Pancreas (tissue), 10 donors: ENCODE measurements at regions of chr10 and their contacts with region 1.

Region 1: GRCh38 chr10:107814865-107815487 is 650.5 kb upstream of the SORCS1 start:
- DNase-seq: peak in 3 of 6 donors; percentile 20 to 53 (median 36)
- ATAC-seq: peak; percentile 66 to 92 (median 90)
- H3K4me3 ChIP-seq: no peak overlapping the region
- H3K27ac ChIP-seq: no peak overlapping the region
- H3K4me1 ChIP-seq: no peaks in the 10 kb centered on the region
- H3K27me3 ChIP-seq: no peaks in the 10 kb centered on the region
- CTCF ChIP-seq: peak in 3 of 4 donors; percentile 31 to 38 (median 33)

Region 2: DNA sequence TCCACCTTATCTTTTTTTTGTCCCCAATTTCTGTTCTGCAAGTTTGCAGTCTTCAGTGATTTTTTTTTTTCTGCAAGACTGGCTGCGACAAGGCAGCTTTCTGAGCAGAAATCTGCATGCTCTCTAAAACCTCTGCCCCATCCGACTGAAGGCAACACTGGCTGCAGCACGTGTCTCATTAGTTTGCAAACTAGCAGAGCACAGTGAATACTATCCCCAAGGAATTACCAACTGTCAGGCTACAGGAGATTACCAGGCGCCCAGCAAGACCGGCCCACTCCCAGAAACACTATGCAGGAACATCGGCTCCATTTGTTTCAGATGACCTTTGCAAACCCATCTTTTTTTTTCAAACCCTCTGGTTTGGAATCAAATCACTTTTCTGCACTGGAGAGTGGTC is 1189.2 kb before region 1 on chr10:
- intact Hi-C with region 1: loop called in 1 of 3 experiments (anchors 10 kb)
- DNase-seq: no peak
- ATAC-seq: no peak
- H3K4me3 ChIP-seq: no peak overlapping the region
- H3K27ac ChIP-seq: no peak overlapping the region
- H3K4me1 ChIP-seq: no peaks in the 10 kb centered on the region
- H3K27me3 ChIP-seq: no peaks in the 10 kb centered on the region
- CTCF ChIP-seq: no peak

Region 3: DNA sequence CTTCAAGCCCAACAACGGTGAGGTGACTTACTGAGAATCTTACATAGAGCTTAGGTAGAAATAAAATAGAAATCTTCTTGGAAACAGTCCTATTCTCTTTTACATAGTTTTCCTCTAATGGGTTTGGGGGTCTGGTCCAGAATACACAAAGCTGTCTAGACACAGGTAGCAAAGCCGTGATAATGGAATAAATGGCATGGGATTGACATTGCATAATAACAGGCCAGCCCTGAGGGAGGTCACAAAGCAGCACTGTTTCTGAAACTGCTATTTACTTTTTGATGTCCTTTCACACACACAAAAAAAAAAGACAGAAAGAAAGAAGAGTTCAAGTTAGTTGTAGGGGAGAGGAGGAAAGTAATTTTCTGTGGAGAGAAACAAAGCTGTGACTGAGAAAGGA is 285.6 kb before region 1 on chr10:
- intact Hi-C with region 1: no loop called
- DNase-seq: no peak
- ATAC-seq: no peak
- H3K4me3 ChIP-seq: no peak overlapping the region
- H3K27ac ChIP-seq: no peak overlapping the region
- H3K4me1 ChIP-seq: no peaks in the 10 kb centered on the region
- H3K27me3 ChIP-seq: no peaks in the 10 kb centered on the region
- CTCF ChIP-seq: no peak

Region 4: DNA sequence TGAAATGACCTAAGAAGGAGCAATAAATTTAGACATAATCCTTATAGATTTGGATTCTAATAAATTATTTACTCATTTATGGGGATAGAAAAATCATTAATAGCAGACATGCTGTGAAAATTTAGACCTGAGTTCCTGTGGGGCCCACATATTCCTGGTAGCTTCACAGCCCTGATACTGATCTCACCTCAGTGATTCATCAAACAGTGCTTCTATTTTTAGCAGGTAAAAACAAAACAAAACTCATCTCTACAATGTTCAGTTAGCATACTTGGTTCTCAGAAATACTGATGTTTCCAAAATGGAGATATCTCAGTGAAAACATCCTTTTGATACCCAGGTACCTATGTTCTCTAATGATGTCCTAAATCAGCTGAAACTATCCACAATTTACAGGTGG is 190.7 kb after region 1 on chr10:
- intact Hi-C with region 1: no loop called
- DNase-seq: no peak
- ATAC-seq: no peak
- H3K4me3 ChIP-seq: no peak overlapping the region
- H3K27ac ChIP-seq: no peak overlapping the region
- H3K4me1 ChIP-seq: no peaks in the 10 kb centered on the region
- H3K27me3 ChIP-seq: no peaks in the 10 kb centered on the region
- CTCF ChIP-seq: no peak

Region 5: DNA sequence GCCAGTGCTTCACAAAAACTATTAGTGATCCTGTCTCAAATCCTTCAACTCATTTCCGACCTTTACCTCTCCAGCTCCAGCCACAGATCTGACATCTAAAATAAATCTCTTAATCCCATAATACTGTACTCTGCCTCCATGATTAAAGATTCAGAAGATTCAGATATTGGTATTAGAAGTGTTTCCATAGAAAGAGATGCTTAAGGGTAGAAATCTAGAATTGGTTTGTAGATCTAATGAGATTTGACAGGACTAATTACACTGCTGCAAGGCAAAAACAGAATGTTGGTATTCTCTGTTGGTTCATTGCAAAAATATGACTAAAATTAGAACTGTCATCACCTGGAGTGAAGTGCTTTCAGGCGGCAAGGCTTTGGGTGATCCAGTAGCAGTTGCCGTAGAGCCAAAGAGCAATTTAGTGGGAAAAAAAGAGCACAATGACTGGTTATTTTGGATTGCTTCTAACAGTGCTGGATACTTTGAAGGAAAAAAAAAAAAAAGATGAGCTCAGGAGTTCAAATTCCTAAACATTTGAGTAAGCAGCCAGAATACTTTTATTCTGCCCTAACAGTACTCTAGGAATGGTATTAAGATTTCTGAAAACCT is 289.7 kb after region 1 on chr10:
- intact Hi-C with region 1: no loop called
- DNase-seq: no peak
- ATAC-seq: no peak
- H3K4me3 ChIP-seq: no peak overlapping the region
- H3K27ac ChIP-seq: no peak overlapping the region
- H3K4me1 ChIP-seq: no peaks in the 10 kb centered on the region
- H3K27me3 ChIP-seq: no peaks in the 10 kb centered on the region
- CTCF ChIP-seq: no peak

Region 6: DNA sequence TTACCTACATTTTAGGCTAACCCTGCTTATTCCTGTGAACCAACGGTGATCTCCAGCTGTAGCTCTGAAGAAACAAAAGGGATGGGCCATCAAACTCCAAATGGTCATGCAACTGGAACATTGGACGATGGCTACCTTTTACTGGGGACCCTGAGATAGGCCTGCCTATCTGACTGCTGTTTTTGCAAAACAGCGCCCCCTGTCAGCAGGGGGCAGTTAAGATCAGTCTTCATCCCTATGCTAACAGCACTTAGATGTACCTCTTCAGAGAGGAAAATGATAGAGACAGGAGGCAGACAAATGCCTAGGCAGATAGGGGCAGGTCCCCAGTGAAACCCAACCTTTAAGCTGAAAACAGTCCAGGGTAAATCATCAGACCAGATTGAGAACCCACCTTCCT is 435.0 kb after region 1 on chr10:
- intact Hi-C with region 1: no loop called
- DNase-seq: no peak
- ATAC-seq: no peak
- H3K4me3 ChIP-seq: no peak overlapping the region
- H3K27ac ChIP-seq: no peak overlapping the region
- H3K4me1 ChIP-seq: no peaks in the 10 kb centered on the region
- H3K27me3 ChIP-seq: no peaks in the 10 kb centered on the region
- CTCF ChIP-seq: no peak